ENCODE measurements at regions of chr6 and their contacts with region 1.

Region 1: DNA sequence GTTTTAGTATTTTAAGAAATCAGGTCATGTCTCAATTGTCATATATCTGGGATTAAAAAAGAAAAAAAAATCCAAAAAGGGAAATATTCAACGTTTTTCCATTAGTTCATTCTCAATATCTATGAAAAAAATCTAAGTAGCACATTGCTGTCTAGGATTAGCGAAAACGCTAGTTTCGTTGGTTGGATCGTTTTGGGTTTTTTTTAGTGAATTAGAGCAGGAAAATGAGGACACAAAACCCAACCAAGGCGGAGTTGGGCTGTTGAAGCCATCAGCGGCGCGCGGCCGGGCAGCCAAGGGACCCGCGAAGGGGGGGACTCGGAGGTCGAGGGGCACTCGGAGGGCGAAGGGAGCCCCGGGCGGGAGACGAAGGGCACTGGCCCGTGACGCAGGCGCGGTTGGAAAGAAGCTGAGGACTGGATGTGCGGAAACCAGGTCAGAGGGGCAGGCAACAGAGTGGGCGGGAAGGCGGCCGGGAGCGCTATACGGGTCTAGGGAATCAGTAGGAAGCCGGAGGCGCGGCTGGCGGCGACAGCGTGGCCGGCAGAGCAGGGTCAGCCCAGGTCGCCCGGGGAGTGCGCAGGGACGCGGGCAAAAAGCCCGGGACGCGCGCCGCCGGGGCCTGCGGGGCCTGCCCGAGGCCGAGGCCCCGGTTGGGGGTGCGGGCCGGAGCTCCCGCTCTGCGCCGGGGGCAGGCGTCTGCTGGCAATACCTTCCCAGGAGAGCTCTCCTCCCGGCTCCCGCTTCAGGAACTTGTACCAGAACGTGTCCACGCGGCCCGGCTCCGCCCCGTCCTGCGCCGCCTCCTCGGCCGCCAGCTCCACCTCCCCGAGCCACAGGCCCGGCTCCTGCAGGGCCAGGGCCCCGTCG is 599 bp downstream of the EPM2A start:
- DNase-seq: peak; percentile 90
- H3K4me3 ChIP-seq: peak overlapping the region; percentile 73
- H3K27ac ChIP-seq: peak overlapping the region; percentile 98
- H3K4me1 ChIP-seq: no peaks in the 10 kb centered on the region
- H3K27me3 ChIP-seq: no peaks in the 10 kb centered on the region
- CTCF ChIP-seq: no peak

Region 2: DNA sequence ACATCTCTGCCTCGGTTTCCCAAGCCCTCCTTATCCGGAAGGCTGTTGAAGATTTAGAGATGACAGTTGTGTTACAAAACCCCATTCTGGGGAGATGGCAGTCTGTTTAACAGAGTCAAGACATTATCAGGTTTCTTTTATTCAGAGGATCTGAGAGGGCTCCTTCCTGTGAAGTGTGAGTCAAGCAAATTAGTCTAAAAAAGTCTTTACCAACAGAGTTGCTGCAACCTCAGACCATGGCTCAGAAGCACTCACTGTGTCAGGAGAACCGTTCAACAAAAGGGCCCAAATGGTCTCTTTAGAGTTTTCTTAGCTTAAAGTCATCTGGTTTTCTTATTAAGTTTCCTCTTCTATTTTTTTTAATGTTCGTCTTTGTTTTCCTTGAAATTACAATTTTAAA is 717.2 kb before region 1 on chr6:
- intact Hi-C with region 1: no loop called
- DNase-seq: no peak
- H3K4me3 ChIP-seq: no peak overlapping the region
- H3K27ac ChIP-seq: no peak overlapping the region
- H3K4me1 ChIP-seq: no peaks in the 10 kb centered on the region
- H3K27me3 ChIP-seq: no peaks in the 10 kb centered on the region
- CTCF ChIP-seq: no peak

Region 3: GRCh38 chr6:145814501-145815308 is 80.0 kb after region 1 on chr6 and contains the start of gene FBXO30:
- intact Hi-C with region 1: loop called (anchors 5 kb)
- DNase-seq: peak; percentile 89
- H3K4me3 ChIP-seq: peak within 1 kb of the TSS; percentile 66
- H3K27ac ChIP-seq: peak within 1 kb of the TSS; percentile 78
- H3K4me1 ChIP-seq: no peaks in the 10 kb centered on the region
- H3K27me3 ChIP-seq: no peaks in the 10 kb centered on the region
- CTCF ChIP-seq: no peak
- total RNA-seq, gene FBXO30: 5.4 to 9.0 TPM

Region 4: GRCh38 chr6:145887969-145888368 is 153.2 kb after region 1 on chr6:
- intact Hi-C with region 1: loop called (anchors 10 kb)
- DNase-seq: no peak
- H3K4me3 ChIP-seq: no peak overlapping the region
- H3K27ac ChIP-seq: no peak overlapping the region
- H3K4me1 ChIP-seq: no peaks in the 10 kb centered on the region
- H3K27me3 ChIP-seq: no peaks in the 10 kb centered on the region
- CTCF ChIP-seq: peak; percentile 13

Region 5: DNA sequence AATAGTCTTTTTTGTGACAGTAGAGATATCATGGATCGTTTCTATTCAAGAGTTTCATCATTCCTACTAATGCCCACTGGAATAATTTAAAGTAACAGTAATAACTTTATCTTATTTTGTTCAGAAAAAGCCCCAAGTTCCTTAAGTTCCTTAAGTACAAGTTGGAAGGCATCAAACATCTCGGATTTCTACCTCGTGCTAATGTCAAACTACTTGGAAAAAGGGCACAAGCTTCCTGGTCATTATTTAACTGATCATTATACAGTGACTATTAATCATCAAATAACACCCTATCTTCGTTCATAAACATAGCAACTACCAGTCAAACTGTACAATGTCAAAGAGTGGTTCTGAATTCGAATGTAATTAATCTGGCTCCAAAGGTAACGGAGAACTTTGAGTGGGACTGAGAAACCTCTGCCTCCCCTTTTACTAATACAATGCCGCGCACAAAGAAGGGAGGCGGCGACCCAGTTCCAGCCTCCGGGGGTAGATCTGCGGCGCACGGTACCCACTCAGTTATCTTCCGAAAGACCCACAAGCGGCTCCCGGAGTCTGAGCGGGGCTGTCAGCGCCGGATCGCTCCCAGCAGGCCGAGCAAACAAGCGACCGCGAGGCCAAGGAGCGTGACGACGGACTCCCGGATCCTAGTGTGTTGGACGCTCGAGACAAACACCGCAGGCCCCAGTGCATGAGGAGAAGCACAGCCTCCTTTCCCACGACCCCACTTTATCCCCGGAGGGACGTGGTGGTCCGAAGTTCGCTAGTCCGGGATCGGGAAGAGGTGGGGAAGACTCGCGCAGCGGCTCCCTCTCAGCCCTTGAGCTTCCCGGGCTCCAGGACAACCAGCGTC is 228.7 kb after region 1 on chr6:
- intact Hi-C with region 1: loop called (anchors 10 kb)
- DNase-seq: peak; percentile 54
- H3K4me3 ChIP-seq: peak overlapping the region; percentile 78
- H3K27ac ChIP-seq: peak overlapping the region; percentile 75
- H3K4me1 ChIP-seq: peaks cover 6% of the 10 kb centered on the region
- H3K27me3 ChIP-seq: no peaks in the 10 kb centered on the region
- CTCF ChIP-seq: no peak